Activated T-helper 2 cell treated with anti-CD3 and anti-CD28 coated beads, Interferon-gamma antibody, Interleukin-2, Interleukin-4, amounts not matched to agents 10 μg/mL and 5 μg/mL and 100 μg/mL, durations not matched to agents 14 hours and 24 hours and 36 hours (primary cell): ENCODE measurements at regions of chr10 and their contacts with region 1.

Region 1: GRCh38 chr10:114911052-114911711 is 26.8 kb upstream of the TRUB1 start:
- DNase-seq: no peak
- H3K4me3 Mint-ChIP-seq: peak overlapping the region; percentile 43
- H3K27ac Mint-ChIP-seq: peak overlapping the region; percentile 86
- H3K4me1 Mint-ChIP-seq: peaks cover 50% of the 10 kb centered on the region
- H3K27me3 Mint-ChIP-seq: peaks cover 2% of the 10 kb centered on the region

Region 2: GRCh38 chr10:114526504-114527238 is 384.5 kb before region 1 on chr10:
- intact Hi-C with region 1: loop called (anchors 5 kb)
- DNase-seq: peak; percentile 88
- H3K4me3 Mint-ChIP-seq: peak overlapping the region; percentile 83
- H3K27ac Mint-ChIP-seq: peak overlapping the region; percentile 94
- H3K4me1 Mint-ChIP-seq: peaks cover 57% of the 10 kb centered on the region
- H3K27me3 Mint-ChIP-seq: no peaks in the 10 kb centered on the region

Region 3: DNA sequence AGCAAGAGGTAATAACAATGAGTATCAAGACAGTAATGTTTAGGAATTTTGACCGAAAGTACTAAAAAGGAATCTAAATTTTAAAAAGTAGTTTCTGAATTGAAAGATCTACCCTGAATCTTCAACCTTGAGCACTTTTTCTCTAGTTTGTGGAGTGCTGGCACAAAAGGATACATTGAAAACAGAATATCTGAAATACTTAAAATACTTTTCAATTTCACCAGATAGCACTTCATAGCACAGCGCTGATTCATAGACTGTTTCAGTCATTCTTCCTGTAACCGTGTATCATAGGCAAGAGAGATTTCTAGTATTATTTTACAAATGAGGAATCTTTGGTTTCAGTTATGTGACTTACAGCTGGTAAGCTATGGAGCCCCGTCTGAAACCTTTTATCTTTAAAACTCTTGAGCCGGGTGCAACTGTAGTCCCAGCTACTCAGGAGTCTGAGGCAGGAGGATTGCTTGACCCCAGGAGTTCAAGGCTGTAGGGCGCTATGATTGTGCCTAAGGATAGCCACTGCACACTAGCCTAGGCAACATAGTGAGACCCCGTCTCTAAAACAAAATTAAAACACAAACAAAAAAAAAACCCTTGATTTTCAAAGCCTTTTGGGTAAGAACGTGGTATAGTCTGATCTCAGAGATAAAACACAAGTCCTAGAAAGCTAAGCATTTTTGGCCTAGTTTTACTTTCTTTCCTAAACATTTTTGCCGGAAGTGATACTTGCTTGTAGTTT is 54.5 kb before region 1 on chr10:
- intact Hi-C with region 1: loop called (anchors 1 kb)
- DNase-seq: no peak
- H3K4me3 Mint-ChIP-seq: peak overlapping the region; percentile 61
- H3K27ac Mint-ChIP-seq: peak overlapping the region; percentile 90
- H3K4me1 Mint-ChIP-seq: peaks cover 21% of the 10 kb centered on the region
- H3K27me3 Mint-ChIP-seq: no peaks in the 10 kb centered on the region

Region 4: DNA sequence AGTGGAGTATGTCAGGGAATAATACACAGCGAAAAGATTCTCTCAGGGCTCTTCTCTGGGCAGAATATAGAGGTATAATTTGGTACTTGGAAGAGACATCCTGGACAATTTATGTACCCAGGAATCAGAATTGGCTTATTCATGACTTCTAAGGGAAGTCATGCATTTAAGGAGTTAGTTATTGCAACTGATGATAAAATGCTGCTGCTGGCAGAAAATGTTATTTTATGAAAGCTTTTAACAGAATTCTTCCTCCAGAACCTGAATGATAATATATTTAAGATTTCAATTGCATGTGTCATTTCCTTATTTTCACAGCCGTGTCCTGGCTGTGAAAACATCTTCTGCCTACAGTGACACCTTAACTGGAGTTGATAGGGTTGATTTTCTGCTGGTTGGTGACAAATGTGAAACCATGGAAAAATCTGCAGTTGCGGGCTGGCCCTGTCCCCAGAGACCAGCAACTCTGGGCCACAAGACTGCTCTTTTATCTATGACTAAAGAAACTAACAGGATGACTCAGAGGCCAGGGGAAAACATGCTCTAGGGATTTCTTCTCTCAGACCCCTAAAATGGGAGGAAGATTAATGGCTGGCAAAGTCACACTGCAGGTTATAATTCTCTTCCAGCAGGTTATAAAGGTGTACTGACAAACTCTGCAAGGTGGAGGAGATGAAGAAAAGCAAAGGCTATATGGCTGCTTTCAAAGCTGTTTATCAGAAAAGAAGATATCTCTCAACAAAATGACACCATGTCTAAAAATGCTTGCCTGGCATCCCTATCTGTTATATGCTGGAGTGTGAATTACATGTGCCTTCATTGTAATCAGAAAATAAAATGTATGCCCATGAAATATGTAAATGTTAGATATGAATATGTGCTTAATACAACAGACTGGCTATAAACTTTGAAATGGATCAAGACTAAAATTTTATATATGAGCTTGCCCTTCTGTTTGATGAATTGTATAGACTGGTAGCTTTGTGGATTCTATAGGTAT is 14.7 kb after region 1 on chr10:
- intact Hi-C with region 1: loop called (anchors 1 kb)
- DNase-seq: peak; percentile 18
- H3K4me3 Mint-ChIP-seq: no peak overlapping the region
- H3K27ac Mint-ChIP-seq: peak overlapping the region; percentile 60
- H3K4me1 Mint-ChIP-seq: peaks cover 22% of the 10 kb centered on the region
- H3K27me3 Mint-ChIP-seq: peaks cover 2% of the 10 kb centered on the region